ENCODE measurements at regions of chr5 and their contacts with region 1.

Region 1: GRCh38 chr5:16934123-16934522 is 2.0 kb downstream of the MYO10 start:
- DNase-seq: peak in 1 of 2 donors; percentile 24
- H3K4me3 ChIP-seq: peak overlapping the region; percentile 54 to 88 (median 78)
- H3K27ac ChIP-seq: no peak overlapping the region
- H3K4me1 ChIP-seq: no peaks in the 10 kb centered on the region
- H3K27me3 ChIP-seq: no peaks in the 10 kb centered on the region
- CTCF ChIP-seq: peak; percentile 41 to 67 (median 53)
- POLR2A ChIP-seq: no peak

Region 2: GRCh38 chr5:16005225-16005624 is 928.9 kb before region 1 on chr5:
- intact Hi-C with region 1: no loop called
- DNase-seq: no peak
- H3K4me3 ChIP-seq: no peak overlapping the region
- H3K27ac ChIP-seq: no peak overlapping the region
- H3K4me1 ChIP-seq: no peaks in the 10 kb centered on the region
- H3K27me3 ChIP-seq: no peaks in the 10 kb centered on the region
- CTCF ChIP-seq: no peak
- POLR2A ChIP-seq: no peak

Region 3: GRCh38 chr5:16916262-16916865 is 17.8 kb before region 1 on chr5:
- intact Hi-C with region 1: loop called (anchors 1 kb)
- DNase-seq: no peak
- H3K4me3 ChIP-seq: no peak overlapping the region
- H3K27ac ChIP-seq: no peak overlapping the region
- H3K4me1 ChIP-seq: peaks cover 0 to 12% of the 10 kb centered on the region in 2 donors
- H3K27me3 ChIP-seq: no peaks in the 10 kb centered on the region
- CTCF ChIP-seq: no peak
- POLR2A ChIP-seq: no peak